Dorsolateral prefrontal cortex (tissue), 120 donors: ENCODE measurements at regions of chr2 and their contacts with region 1.

Region 1: GRCh38 chr2:64889803-64890202 is 99.4 kb upstream of the SLC1A4 start:
- DNase-seq: no peak
- H3K4me3 ChIP-seq: no peak overlapping the region
- H3K27ac ChIP-seq: no peak overlapping the region
- H3K27me3 ChIP-seq: no peaks in the 10 kb centered on the region
- CTCF ChIP-seq: no peak

Region 2: DNA sequence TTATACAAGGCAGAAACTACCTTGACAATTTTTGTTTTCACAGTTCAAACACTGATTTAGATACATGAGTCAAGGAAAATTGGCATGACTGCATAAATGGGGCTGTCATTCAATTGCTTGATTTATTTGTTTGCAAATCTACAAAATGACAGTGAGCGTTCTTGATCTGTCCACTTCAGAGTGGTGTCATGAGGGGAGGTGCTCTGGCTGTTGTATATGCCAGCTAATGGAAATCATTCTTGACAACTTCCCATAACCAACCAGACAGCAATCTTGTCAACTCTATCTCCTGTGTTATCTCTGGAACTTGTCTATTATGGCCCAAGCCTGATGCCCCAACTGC is 1168.8 kb before region 1 on chr2:
- intact Hi-C with region 1: loop called in 1 of 2 experiments (anchors 5 kb)
- DNase-seq: no peak
- H3K4me3 ChIP-seq: no peak overlapping the region
- H3K27ac ChIP-seq: no peak overlapping the region
- H3K27me3 ChIP-seq: no peaks in the 10 kb centered on the region
- CTCF ChIP-seq: no peak

Region 3: GRCh38 chr2:64859312-64860212 is 30.2 kb before region 1 on chr2:
- intact Hi-C with region 1: no loop called
- DNase-seq: peak; percentile 26 to 76 (median 65)
- H3K4me3 ChIP-seq: peak overlapping the region; percentile 24 to 70 (median 55)
- H3K27ac ChIP-seq: peak overlapping the region; percentile 19 to 93 (median 85)
- H3K27me3 ChIP-seq: no peaks in the 10 kb centered on the region
- CTCF ChIP-seq: peak in 11 of 56 donors; percentile 4 to 18 (median 14)